ENCODE measurements at regions of chr1 and their contacts with region 1.

Region 1: DNA sequence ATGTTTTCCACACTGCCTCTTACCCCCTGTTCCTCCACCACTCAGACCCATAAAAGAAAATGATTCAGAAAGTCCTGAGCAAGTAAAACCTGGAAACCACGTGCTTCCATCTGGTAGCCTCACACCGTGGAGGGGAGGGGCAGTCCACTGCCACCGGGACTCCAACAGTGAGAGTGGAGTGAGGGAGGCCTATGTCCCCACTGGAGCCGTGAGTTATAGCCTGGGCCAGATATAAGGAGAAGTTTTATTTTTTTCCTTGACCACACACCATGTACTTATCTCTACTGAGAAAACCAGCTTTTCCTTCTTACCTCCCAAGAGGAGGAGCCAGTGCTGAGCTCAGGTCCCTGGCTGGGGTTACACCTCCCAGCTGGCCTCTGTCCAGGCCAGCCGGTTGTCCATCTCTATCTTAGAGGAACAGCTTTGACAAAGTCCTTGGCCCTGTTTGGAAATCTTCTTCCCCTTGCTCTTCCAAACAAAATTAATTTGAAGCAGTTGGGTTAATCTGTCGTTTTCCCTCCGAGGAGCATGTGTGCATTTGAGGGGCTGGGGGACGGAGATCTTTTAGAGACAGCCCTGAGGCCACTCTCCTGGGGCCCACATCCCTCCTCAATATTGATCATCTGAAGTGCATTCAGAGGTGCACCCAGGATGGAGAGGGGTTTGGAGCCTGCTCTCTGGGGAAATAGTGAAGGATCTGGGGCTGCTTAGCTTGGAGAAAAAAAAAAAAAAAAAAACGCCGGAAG is 49.1 kb upstream of the SERBP1 start:
- DNase-seq: peak; percentile 57

Region 2: DNA sequence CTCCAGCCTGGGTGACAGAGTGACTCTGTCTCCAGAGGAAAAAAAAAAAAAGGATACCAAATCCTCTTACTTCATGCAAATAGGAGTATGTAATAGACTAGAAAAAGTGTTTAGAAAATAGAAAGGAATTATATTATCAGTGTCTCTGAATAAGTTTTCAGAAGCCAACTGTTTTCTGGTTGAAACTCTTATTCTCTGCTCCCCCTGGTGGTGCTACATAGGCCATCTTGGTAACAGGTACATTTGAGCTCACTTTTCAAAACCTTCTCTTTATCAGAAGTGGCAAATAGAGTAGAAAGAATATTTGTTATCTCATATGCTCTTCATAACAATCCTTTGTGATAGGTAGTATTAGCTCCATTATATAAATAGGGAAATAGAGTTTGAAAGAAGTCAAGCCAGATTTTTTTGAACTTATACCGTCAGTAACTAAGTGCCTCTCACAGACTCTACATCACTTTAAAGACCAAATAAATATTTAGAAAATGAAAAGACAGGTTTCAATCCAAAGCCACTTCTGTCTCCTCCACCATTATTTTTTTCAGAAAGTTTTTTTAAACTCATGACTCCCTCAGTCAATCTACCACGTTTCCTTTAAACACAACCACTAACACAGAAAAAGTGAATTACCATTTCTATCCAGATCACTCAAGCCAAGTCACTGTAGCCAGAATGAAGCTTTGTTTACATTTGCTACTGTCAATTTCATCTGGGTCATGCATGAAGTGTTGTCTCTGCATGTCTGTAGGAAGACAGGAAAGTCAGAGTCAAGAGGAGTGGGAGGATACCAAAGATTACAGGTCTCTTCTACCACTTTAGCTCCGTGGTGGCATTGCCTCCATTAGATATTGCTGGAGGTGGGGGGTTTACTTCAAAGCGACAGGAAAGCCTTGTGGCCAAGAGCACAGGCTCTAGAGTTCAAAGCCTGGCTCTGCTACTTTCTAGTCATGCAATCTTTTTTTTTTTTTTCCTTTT is 267.4 kb before region 1 on chr1:
- CTCF ChIA-PET with region 1: interaction called, 10 read pairs
- POLR2A ChIA-PET with region 1: no interaction called
- DNase-seq: no peak